Activated T-helper 2 cell treated with anti-CD3 and anti-CD28 coated beads, Interferon-gamma antibody, Interleukin-2, Interleukin-4, amounts not matched to agents 10 μg/mL and 5 μg/mL and 100 μg/mL, durations not matched to agents 14 hours and 24 hours and 36 hours (primary cell): ENCODE measurements at regions of chr4 and their contacts with region 1.

Region 1: GRCh38 chr4:26746802-26747213 is 113.8 kb upstream of the STIM2 start:
- DNase-seq: no peak
- H3K4me3 Mint-ChIP-seq: no peak overlapping the region
- H3K27ac Mint-ChIP-seq: no peak overlapping the region
- H3K4me1 Mint-ChIP-seq: peaks cover 23% of the 10 kb centered on the region
- H3K27me3 Mint-ChIP-seq: peaks cover 19% of the 10 kb centered on the region

Region 2: DNA sequence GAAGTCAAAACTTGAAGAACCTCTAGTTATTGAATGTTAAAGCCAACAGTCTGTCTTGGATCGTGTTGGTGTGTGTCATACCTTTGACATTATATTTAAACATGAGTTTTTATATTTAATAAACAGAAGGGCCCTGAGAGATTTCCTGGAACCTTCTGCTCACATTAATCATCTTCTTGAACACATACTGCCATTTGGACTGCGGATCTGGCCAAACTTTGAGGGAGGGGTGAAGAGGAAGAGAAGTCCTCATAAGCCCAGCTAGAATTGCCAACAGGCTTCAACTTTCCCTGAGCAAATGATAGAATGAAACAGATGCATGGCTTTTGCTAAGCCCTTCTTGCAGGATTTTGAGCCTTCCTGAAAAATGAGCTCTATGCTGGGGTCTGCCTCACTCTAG is 283.9 kb before region 1 on chr4:
- intact Hi-C with region 1: no loop called
- DNase-seq: no peak
- H3K4me3 Mint-ChIP-seq: no peak overlapping the region
- H3K27ac Mint-ChIP-seq: no peak overlapping the region
- H3K4me1 Mint-ChIP-seq: peaks cover 12% of the 10 kb centered on the region
- H3K27me3 Mint-ChIP-seq: peaks cover 10% of the 10 kb centered on the region

Region 3: GRCh38 chr4:26568446-26568994 is 178.3 kb before region 1 on chr4:
- intact Hi-C with region 1: loop called (anchors 5 kb)
- DNase-seq: no peak
- H3K4me3 Mint-ChIP-seq: no peak overlapping the region
- H3K27ac Mint-ChIP-seq: peak overlapping the region; percentile 33
- H3K4me1 Mint-ChIP-seq: peaks cover 23% of the 10 kb centered on the region
- H3K27me3 Mint-ChIP-seq: peaks cover 5% of the 10 kb centered on the region

Region 4: DNA sequence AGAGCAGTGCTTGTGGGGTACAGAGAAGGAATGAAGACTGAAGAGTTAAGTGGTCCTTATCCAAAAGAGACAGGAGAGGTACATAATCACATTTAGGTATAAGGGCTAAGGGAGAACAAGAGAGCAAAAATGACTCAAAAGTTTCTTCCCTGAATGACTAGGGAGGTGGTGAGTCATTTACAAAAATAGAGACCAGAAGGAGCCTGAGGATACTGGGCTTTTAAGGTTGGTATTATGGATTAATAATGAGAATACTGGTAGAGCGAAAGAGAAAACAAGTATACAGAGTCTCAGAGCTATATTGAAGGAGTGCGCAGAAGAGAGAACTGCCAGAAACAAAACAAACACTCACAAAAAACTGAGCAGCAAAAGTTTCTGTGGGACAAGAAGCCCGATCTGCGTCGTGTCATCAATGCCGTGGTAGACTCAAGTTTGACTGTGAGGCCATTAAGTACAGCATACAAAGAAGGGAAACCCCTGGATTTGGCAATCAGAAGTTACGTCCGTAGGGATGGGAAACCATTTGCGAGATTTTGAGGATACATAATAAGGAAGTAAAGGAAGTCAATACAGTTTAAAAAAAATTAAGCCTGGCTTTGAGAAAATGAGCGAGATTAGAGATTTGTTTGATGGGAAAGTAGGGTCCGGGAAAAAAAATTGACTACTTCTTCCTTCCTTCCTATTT is 15.3 kb before region 1 on chr4:
- intact Hi-C with region 1: loop called (anchors 1 kb)
- DNase-seq: no peak
- H3K4me3 Mint-ChIP-seq: no peak overlapping the region
- H3K27ac Mint-ChIP-seq: no peak overlapping the region
- H3K4me1 Mint-ChIP-seq: peaks cover 11% of the 10 kb centered on the region
- H3K27me3 Mint-ChIP-seq: peaks cover 4% of the 10 kb centered on the region

Region 5: DNA sequence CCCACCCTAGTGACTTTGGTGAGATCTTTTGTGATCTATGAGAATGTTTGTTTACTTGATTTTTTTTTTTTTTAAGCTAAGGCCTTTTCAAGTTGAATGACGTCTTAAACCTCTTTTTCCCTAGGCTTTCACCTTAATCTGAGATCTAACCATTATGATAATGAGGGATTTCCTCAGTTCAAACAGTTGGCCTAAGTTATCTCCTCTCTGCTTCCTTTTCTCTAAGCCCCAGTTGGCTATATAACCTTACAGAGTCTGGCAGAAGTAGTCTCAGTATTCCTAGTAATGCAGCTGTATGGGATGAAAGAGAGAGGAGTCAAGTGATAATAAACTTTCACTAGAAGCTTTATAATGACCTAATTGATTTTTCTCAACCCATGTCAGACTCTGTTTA is 212.8 kb after region 1 on chr4:
- intact Hi-C with region 1: loop called (anchors 1 kb)
- DNase-seq: no peak
- H3K4me3 Mint-ChIP-seq: no peak overlapping the region
- H3K27ac Mint-ChIP-seq: peak overlapping the region; percentile 50
- H3K4me1 Mint-ChIP-seq: peaks cover 25% of the 10 kb centered on the region
- H3K27me3 Mint-ChIP-seq: no peaks in the 10 kb centered on the region

Region 6: DNA sequence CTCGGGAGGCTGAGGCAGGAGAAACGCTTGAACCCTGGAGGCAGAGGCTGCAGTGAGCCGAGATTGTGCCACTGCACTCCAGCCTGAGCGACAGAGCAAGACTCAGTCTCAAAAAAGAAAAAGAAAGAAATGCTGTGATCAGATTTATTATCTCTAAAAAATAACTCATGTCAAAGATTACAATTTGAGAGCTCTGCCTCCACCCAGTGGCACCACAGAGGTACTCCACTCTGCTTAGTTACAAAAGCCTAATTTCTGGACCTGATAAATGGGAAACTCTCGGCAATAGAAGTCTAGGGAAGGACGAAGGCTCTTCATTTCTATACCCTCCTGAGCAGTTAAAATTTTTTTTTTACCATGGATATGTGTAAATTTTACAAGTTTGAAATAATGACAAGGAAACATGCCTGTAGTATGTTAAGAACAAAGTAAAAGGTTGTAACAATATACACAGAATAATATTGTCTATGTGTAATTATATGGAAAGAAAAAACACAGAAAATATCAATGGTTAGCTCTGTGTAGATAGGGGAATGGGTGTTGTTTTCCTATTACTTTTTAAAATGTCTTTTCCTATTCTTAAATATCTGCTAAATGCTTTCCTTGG is 263.6 kb after region 1 on chr4:
- intact Hi-C with region 1: loop called (anchors 5 kb)
- DNase-seq: peak; percentile 26
- H3K4me3 Mint-ChIP-seq: no peak overlapping the region
- H3K27ac Mint-ChIP-seq: no peak overlapping the region
- H3K4me1 Mint-ChIP-seq: peaks cover 9% of the 10 kb centered on the region
- H3K27me3 Mint-ChIP-seq: no peaks in the 10 kb centered on the region